MCF 10A (cell line): ENCODE measurements at regions of chr9 and their contacts with region 1.

Region 1: GRCh38 chr9:105608721-105609598 is 51.0 kb downstream of the FKTN start:
- DNase-seq: peak; percentile 63
- H3K4me3 Mint-ChIP-seq: no peak overlapping the region
- H3K27ac Mint-ChIP-seq: no peak overlapping the region
- H3K4me1 Mint-ChIP-seq: no peaks in the 10 kb centered on the region
- H3K27me3 Mint-ChIP-seq: no peaks in the 10 kb centered on the region
- CTCF ChIP-seq: peak; percentile 50

Region 2: GRCh38 chr9:105593145-105593544 is 15.8 kb before region 1 on chr9:
- CTCF ChIA-PET with region 1: interaction called, 13 read pairs
- POLR2A ChIA-PET with region 1: no interaction called
- intact Hi-C with region 1: no loop called
- DNase-seq: no peak
- H3K4me3 Mint-ChIP-seq: no peak overlapping the region
- H3K27ac Mint-ChIP-seq: no peak overlapping the region
- H3K4me1 Mint-ChIP-seq: no peaks in the 10 kb centered on the region
- H3K27me3 Mint-ChIP-seq: no peaks in the 10 kb centered on the region
- CTCF ChIP-seq: no peak

Region 3: DNA sequence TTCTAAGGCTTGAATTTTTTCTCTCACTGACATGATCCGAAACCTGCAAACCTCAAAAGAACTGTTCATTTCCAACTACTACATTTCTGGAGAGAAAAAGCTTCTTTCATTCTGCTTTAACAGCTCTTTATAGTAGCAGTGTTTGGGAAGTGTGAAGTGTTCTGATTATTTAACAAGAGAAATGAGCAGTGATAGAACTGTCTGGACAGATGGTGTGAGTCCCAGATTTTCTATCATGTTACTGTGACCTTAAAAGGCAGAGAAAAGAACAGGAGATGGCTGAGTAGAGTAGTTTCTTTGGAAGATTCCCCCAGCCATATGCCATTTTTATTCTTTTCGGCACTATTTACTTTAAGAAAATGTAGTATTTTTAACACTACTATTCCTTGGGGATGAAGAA is 12.0 kb after region 1 on chr9:
- CTCF ChIA-PET with region 1: interaction called, 13 read pairs
- POLR2A ChIA-PET with region 1: interaction called, 3 read pairs
- intact Hi-C with region 1: no loop called
- DNase-seq: no peak
- H3K4me3 Mint-ChIP-seq: no peak overlapping the region
- H3K27ac Mint-ChIP-seq: no peak overlapping the region
- H3K4me1 Mint-ChIP-seq: no peaks in the 10 kb centered on the region
- H3K27me3 Mint-ChIP-seq: no peaks in the 10 kb centered on the region
- CTCF ChIP-seq: no peak

Region 4: DNA sequence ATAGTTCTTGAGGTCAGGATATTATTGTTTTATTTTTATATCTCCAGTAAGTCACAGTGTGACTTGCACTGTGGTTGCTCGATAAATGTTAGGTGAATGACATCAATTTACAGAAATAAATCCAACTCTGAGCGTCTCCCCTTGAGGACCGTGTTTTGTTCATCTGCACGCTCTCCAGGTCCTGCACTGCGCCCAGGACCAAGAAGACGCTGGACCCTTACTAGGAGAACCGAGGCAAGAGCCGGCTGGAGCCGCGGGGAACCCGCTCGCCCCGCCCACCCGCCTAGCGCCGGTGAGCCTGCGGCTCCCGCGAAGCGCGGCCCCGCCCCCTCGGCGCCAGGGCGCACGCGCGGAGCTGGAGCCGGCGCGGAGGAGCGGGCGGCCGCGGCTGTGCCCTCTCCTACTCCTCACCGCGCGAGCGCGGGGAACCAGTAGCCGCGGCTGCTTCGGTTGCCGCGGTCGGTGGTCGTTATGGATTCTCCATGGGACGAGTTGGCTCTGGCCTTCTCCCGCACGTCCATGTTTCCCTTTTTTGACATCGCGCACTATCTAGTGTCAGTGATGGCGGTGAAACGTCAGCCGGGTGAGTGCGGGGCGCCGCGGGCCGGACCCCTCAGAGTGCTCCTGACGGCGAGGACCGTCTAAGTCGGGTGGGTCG is 85.4 kb after region 1 on chr9 and contains the start of gene TMEM38B:
- CTCF ChIA-PET with region 1: interaction called, 8 read pairs
- POLR2A ChIA-PET with region 1: no interaction called
- intact Hi-C with region 1: loop called (anchors 10 kb)
- DNase-seq: peak; percentile 78
- H3K4me3 Mint-ChIP-seq: peak within 1 kb of the TSS; percentile 85
- H3K27ac Mint-ChIP-seq: peak within 1 kb of the TSS; percentile 41
- H3K4me1 Mint-ChIP-seq: peaks cover 25% of the 10 kb centered on the region
- H3K27me3 Mint-ChIP-seq: no peaks in the 10 kb centered on the region
- CTCF ChIP-seq: no peak
- total RNA-seq, gene TMEM38B: 12.5 and 18.4 TPM in 2 replicates

Region 5: GRCh38 chr9:105708405-105708804 is 99.4 kb after region 1 on chr9:
- CTCF ChIA-PET with region 1: interaction called, 21 read pairs
- POLR2A ChIA-PET with region 1: no interaction called
- intact Hi-C with region 1: no loop called
- DNase-seq: no peak
- H3K4me3 Mint-ChIP-seq: no peak overlapping the region
- H3K27ac Mint-ChIP-seq: peak overlapping the region; percentile 63
- H3K4me1 Mint-ChIP-seq: no peaks in the 10 kb centered on the region
- H3K27me3 Mint-ChIP-seq: no peaks in the 10 kb centered on the region
- CTCF ChIP-seq: no peak

Region 6: GRCh38 chr9:105713260-105714019 is 104.5 kb after region 1 on chr9:
- CTCF ChIA-PET with region 1: interaction called, 23 read pairs
- POLR2A ChIA-PET with region 1: no interaction called
- intact Hi-C with region 1: loop called (anchors 2 kb)
- DNase-seq: no peak
- H3K4me3 Mint-ChIP-seq: no peak overlapping the region
- H3K27ac Mint-ChIP-seq: no peak overlapping the region
- H3K4me1 Mint-ChIP-seq: no peaks in the 10 kb centered on the region
- H3K27me3 Mint-ChIP-seq: no peaks in the 10 kb centered on the region
- CTCF ChIP-seq: no peak

Region 7: DNA sequence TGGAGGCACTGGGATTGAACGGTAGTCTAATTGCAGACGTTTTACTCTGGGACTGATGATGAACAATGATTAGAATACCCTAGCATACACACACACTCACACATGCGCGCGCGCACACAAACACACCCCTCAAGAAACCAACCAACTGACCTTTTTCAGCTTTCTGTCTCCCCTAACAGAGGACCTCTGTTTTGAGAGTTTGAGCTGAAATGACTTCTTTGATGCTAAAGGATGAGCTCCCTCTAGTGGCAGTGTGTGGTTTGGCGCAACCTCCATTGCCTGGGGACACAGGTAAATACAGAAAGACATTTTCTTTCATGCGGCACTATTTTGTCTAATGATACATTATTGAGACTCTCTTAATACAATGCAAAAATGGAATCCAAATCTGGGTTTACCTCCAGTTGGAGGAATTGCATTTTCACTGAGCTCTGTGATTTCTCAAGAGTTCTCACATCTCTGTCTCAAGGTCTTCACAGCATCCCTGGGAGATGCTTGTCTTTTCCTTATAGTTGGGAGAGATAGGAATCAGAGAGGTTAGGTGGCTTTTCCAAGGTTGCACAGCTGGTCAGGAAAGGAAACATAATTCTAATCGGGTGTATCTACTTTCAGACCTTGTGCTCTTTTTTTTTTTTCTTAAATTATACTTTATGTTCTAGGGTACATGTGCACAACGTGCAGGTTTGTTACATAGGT is 272.8 kb after region 1 on chr9:
- CTCF ChIA-PET with region 1: interaction called, 5 read pairs
- POLR2A ChIA-PET with region 1: no interaction called
- intact Hi-C with region 1: loop called (anchors 5 kb)
- DNase-seq: peak; percentile 74
- H3K4me3 Mint-ChIP-seq: no peak overlapping the region
- H3K27ac Mint-ChIP-seq: no peak overlapping the region
- H3K4me1 Mint-ChIP-seq: no peaks in the 10 kb centered on the region
- H3K27me3 Mint-ChIP-seq: peaks cover 13% of the 10 kb centered on the region
- CTCF ChIP-seq: peak; percentile 69